ENCODE measurements at regions of chr2 and their contacts with region 1.

Region 1: DNA sequence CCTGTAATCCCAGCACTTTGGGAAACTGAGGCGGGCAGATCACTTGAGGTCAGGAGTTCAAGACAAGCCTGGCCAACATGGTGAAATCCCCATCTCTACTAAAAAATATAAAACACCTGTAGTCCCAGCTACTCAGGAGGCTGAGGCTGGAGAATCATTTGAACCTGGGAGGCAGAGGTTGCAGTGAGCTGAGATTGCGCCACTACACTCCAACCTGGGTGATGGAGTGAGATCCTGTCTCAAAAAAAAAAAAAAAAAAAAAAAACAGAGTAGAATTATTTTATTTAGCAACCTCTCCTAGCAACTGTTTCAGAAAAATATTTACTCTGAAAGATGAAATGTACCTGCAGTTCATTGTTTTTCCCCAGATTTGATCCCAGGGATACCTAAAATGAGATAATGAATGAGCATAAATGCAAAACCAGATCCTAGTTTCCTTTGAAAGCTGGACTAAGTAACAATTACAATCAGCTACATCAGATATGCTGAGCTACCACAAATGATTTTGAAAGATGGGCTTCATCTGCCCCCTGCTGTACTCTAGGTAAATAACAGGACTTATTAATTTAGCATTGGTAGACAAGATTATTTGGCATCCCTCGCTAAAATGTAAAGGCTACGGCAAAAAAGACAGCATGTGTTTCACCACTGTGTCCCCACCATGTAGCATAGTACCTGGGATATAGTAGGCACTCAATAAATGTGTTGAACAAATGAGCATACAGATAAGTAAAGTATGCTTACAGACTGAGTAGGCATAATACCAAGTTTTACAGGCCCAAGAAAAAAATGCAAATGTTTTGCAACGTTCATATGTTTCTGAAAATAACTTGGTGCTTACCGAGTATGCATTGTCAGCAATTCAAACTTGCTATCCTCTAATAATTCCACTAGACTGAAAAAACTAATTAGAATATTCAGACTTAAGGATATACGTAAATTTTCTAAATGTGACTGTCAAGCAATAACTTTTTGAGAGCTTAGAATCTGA is 102.5 kb downstream of the ATL2 start:
- DNase-seq: peak; percentile 41 to 79
- H3K4me3 ChIP-seq: no peak overlapping the region
- H3K27ac ChIP-seq: peak overlapping the region; percentile 50; the same call in 1 of the 2 replicates
- H3K4me1 ChIP-seq: peaks cover 4% of the 10 kb centered on the region; the same call in 1 of the 2 replicates
- H3K27me3 ChIP-seq: no peaks in the 10 kb centered on the region
- CTCF ChIP-seq: peak; percentile 95

Region 2: GRCh38 chr2:37397166-37397565 is 877.4 kb before region 1 on chr2:
- CTCF ChIA-PET with region 1: no interaction called
- POLR2A ChIA-PET with region 1: no interaction called
- intact Hi-C with region 1: loop called (anchors 2 kb)
- DNase-seq: no peak
- H3K4me3 ChIP-seq: no peak overlapping the region
- H3K27ac ChIP-seq: no peak overlapping the region
- H3K4me1 ChIP-seq: 0 out of 2 replicates have a peak, but pooled peaks cover 4% of the 10 kb centered on the region
- H3K27me3 ChIP-seq: no peaks in the 10 kb centered on the region
- CTCF ChIP-seq: no peak

Region 3: DNA sequence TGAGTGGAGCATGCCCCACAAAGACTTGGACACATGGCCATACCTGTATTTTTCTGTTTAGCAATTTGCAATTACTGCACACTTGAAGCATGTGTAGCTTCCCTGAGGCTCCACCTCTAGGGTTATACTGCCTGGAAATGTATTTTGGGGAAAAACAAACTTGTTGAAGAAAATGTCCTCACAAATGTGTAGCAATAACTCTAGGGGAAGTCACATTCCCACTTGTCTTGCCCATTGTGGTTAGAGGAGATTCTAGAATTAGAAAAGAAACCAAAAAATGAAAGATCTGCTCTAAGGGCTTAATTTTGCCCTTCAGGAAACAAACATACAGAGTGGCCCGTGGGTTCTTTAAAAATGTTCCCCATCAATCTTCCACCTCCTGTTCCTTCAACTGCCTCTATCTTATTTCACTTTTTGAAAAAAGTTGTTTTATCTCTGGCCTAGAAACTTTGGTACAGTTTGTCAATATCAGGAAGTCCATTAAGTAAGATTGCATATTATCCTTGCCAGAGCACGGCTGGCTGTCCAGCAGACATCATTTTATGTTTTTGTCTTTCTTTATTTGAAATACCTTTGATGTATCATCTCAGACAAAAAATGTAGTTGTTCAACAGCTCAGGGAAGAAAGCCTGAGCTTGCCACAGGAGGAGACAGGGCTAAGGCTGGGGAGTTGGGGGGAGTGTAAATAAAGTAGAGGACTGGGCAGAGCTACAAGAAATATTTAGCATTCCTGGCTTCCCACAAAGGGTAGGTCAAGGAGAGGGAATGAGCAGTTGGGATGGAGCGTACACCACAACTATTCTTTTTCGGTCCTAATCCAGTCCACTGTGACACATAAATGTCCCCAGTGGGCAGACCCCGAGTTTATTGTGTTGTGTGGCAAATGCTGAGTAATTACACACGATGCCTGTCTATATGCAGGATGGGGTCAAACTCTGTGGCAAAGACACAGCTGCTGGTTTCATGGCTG is 506.3 kb before region 1 on chr2:
- CTCF ChIA-PET with region 1: no interaction called
- POLR2A ChIA-PET with region 1: no interaction called
- intact Hi-C with region 1: no loop called
- DNase-seq: peak; percentile 75 to 95
- H3K4me3 ChIP-seq: peak overlapping the region; percentile 9; the same call in 1 of the 2 replicates
- H3K27ac ChIP-seq: peak overlapping the region; percentile 66
- H3K4me1 ChIP-seq: peaks cover 42% of the 10 kb centered on the region
- H3K27me3 ChIP-seq: no peaks in the 10 kb centered on the region
- CTCF ChIP-seq: no peak

Region 4: DNA sequence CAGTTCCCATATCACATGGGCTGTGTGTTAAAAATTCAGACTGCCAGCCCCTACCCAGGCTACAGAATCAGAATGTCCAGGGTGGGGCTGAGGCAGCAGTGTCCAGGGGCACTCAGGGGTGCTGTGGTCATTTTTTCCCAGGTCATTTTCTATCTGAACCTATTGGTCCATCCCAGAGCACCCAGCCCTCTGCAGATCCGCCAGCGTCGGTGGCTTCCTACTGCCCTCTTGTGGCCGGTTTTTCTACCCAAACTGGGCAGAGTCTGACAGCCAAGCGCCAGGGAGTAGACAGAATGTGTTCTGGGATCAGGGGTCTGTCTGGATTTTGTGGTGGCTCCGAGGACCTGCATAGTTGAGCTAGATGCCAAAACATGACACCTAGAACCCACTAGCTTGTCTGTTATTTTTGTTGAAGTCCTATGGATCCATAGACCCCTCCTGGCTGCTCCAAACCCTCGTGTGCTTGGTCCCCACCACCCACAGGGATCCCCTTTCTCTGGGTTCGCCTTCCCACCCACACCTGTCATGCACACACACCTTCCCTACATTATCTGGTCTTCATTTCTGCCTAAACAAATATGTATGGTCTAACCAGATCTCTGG is 383.6 kb before region 1 on chr2:
- CTCF ChIA-PET with region 1: no interaction called
- POLR2A ChIA-PET with region 1: no interaction called
- intact Hi-C with region 1: loop called (anchors 10 kb)
- DNase-seq: peak; percentile 62 to 65
- H3K4me3 ChIP-seq: no peak overlapping the region
- H3K27ac ChIP-seq: no peak overlapping the region
- H3K4me1 ChIP-seq: no peaks in the 10 kb centered on the region
- H3K27me3 ChIP-seq: no peaks in the 10 kb centered on the region
- CTCF ChIP-seq: peak; percentile 90

Region 5: DNA sequence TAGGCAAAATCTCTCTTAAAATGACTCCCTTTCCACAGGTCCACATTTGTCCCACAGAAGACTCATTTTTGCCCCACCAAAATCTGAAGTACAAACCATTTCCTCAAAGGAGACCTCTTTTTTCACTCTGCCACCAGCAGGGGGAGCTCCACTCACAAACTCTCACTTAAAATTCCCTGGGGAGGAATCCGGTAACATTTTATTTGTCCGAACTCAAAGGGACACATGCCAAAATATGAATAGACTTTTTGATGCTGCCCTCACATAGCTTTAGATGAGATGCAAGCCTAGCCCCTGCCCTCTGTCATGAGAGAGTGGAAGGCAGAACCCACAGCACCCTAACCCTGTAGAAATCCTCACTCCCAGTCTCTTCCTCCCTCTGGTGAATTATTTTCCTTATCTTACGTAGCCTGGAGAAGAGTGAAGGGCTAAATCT is 292.4 kb before region 1 on chr2:
- CTCF ChIA-PET with region 1: interaction called, 3 read pairs
- POLR2A ChIA-PET with region 1: no interaction called
- intact Hi-C with region 1: loop called (anchors 1 kb)
- DNase-seq: peak; percentile 48 to 61
- H3K4me3 ChIP-seq: no peak overlapping the region
- H3K27ac ChIP-seq: no peak overlapping the region
- H3K4me1 ChIP-seq: peaks cover 12% of the 10 kb centered on the region
- H3K27me3 ChIP-seq: no peaks in the 10 kb centered on the region
- CTCF ChIP-seq: peak; percentile 96

Region 6: DNA sequence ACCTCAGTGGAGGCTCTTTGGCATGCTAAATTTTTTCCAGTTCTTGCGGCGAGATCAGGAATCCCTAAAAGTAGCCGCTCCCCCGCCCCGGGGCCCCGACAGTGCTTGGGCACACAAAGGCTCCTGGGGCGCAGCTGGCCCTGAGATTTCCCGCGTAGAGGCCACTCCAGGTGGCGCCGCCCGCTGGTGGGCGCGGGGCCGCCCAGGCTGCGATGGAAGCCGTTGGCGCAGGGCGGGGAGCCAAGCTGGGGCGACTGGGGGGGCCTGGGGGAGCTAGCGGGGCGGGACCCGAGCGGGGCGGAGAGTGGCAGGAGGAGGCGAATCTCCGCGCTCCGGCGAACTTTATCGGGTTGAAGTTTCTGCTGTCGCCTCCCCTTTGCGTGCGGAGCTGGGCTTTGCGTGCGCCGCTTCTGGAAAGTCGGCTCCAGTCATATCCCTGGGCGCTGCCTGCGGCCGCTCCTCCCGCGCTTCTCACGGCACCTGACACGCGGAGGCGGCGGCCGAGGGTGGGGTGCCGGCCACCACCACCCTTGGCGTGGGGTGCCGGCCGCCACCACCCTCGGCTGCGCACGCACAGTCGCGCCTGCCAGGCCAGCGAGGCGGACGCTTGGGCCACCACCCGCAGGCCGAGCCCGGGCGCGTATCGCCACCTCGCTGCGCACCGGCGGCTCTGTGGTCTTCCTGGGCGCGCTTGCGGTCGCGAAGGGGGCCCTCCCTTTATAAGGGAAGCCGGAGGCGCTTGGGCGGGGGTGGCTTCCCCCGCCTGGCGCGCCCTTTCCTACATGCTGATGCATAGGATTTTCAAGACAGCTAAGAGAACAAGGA is 197.8 kb before region 1 on chr2:
- CTCF ChIA-PET with region 1: interaction called, 21 read pairs
- POLR2A ChIA-PET with region 1: no interaction called
- intact Hi-C with region 1: loop called (anchors 1 kb)
- DNase-seq: peak; percentile 94
- H3K4me3 ChIP-seq: peak overlapping the region; percentile 69
- H3K27ac ChIP-seq: peak overlapping the region; percentile 98
- H3K4me1 ChIP-seq: peaks cover 45% of the 10 kb centered on the region
- H3K27me3 ChIP-seq: no peaks in the 10 kb centered on the region
- CTCF ChIP-seq: peak; percentile 77

Region 7: DNA sequence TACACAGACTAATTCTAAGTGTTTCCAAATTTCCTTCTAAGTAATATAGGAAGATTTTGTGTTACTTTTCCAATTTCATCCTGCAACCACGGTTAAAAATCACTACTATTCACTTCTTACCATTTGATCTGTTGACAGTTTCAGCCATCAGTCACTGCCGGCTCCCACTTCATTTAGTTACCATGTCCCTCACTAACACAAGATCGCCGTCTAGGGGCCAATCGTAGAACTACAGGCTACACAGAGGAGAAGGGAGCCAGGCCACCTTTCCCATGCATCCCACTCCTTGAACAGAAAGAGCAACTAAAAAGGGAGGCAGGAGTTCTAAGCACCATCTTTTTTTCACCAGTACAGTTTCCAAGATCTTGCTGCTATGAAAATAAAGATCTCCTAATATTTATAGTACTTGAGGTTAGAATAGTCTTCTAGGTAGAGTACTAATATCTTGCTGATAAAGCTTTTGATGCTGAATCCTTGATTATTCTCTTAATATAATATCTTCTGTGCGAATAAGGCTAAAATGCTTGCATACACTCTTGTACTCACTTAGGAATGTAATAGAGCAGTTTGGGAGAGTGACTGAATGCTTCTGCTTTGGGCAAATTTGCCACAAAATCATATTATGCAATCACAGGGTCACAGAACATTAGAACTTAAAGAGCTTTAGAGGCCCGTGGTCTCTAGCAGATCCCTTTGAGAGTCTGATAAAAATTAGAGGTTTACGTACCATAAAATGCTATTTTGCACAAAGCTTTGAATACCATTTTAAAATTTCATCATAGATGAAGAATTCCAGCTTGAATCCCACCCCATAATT is 159.2 kb before region 1 on chr2:
- CTCF ChIA-PET with region 1: interaction called, 3 read pairs
- POLR2A ChIA-PET with region 1: no interaction called
- intact Hi-C with region 1: loop called (anchors 1 kb)
- DNase-seq: peak; percentile 69 to 86
- H3K4me3 ChIP-seq: no peak overlapping the region
- H3K27ac ChIP-seq: peak overlapping the region; percentile 42
- H3K4me1 ChIP-seq: peaks cover 44% of the 10 kb centered on the region
- H3K27me3 ChIP-seq: no peaks in the 10 kb centered on the region
- CTCF ChIP-seq: peak; percentile 100

Region 8: GRCh38 chr2:38245114-38245641 is 29.4 kb before region 1 on chr2:
- CTCF ChIA-PET with region 1: interaction called, 19 read pairs
- POLR2A ChIA-PET with region 1: no interaction called
- intact Hi-C with region 1: no loop called
- DNase-seq: peak; percentile 50 to 88
- H3K4me3 ChIP-seq: no peak overlapping the region
- H3K27ac ChIP-seq: peak overlapping the region; percentile 20; the same call in 1 of the 2 replicates
- H3K4me1 ChIP-seq: peaks cover 19% of the 10 kb centered on the region
- H3K27me3 ChIP-seq: no peaks in the 10 kb centered on the region
- CTCF ChIP-seq: no peak

Region 9: GRCh38 chr2:38301340-38301968 is 26.9 kb after region 1 on chr2:
- CTCF ChIA-PET with region 1: no interaction called
- POLR2A ChIA-PET with region 1: no interaction called
- intact Hi-C with region 1: no loop called
- DNase-seq: no peak
- H3K4me3 ChIP-seq: no peak overlapping the region
- H3K27ac ChIP-seq: no peak overlapping the region
- H3K4me1 ChIP-seq: no peaks in the 10 kb centered on the region
- H3K27me3 ChIP-seq: no peaks in the 10 kb centered on the region
- CTCF ChIP-seq: no peak

Region 10: GRCh38 chr2:38362232-38362631 is 87.7 kb after region 1 on chr2:
- CTCF ChIA-PET with region 1: no interaction called
- POLR2A ChIA-PET with region 1: no interaction called
- intact Hi-C with region 1: no loop called
- DNase-seq: no peak
- H3K4me3 ChIP-seq: no peak overlapping the region
- H3K27ac ChIP-seq: no peak overlapping the region
- H3K4me1 ChIP-seq: peaks cover 7% of the 10 kb centered on the region; the same call in 1 of the 2 replicates
- H3K27me3 ChIP-seq: no peaks in the 10 kb centered on the region
- CTCF ChIP-seq: no peak

Region 11: GRCh38 chr2:38398759-38399158 is 124.2 kb after region 1 on chr2:
- CTCF ChIA-PET with region 1: no interaction called
- POLR2A ChIA-PET with region 1: no interaction called
- intact Hi-C with region 1: no loop called
- DNase-seq: no peak
- H3K4me3 ChIP-seq: no peak overlapping the region
- H3K27ac ChIP-seq: no peak overlapping the region
- H3K4me1 ChIP-seq: peaks cover 32% of the 10 kb centered on the region
- H3K27me3 ChIP-seq: no peaks in the 10 kb centered on the region
- CTCF ChIP-seq: no peak